ENCODE measurements at regions of chr9 and their contacts with region 1.

Region 1: GRCh38 chr9:112224401-112225289 is 49.5 kb upstream of the SUSD1 start:
- DNase-seq: no peak
- ATAC-seq: no peak
- H3K4me3 ChIP-seq: no peak overlapping the region
- H3K27ac ChIP-seq: no peak overlapping the region
- H3K4me1 ChIP-seq: peaks cover 0 to 7% (median 0%) of the 10 kb centered on the region in 12 donors
- H3K27me3 ChIP-seq: no peaks in the 10 kb centered on the region
- CTCF ChIP-seq: no peak
- POLR2A ChIP-seq: no peak

Region 2: GRCh38 chr9:112041536-112042243 is 183.0 kb before region 1 on chr9:
- intact Hi-C with region 1: no loop called
- DNase-seq: peak in 3 of 5 donors; percentile 40 to 77 (median 46)
- ATAC-seq: peak; percentile 63 to 97 (median 91)
- H3K4me3 ChIP-seq: no peak overlapping the region
- H3K27ac ChIP-seq: peak overlapping the region in 2 of 12 donors; percentile 38 to 41
- H3K4me1 ChIP-seq: peaks cover 0 to 16% (median 0%) of the 10 kb centered on the region in 12 donors
- H3K27me3 ChIP-seq: no peaks in the 10 kb centered on the region
- CTCF ChIP-seq: no peak
- POLR2A ChIP-seq: no peak

Region 3: GRCh38 chr9:112194969-112195431 is 29.6 kb before region 1 on chr9:
- intact Hi-C with region 1: no loop called
- DNase-seq: peak in 1 of 5 donors; percentile 23
- ATAC-seq: peak; percentile 49 to 60 (median 56)
- H3K4me3 ChIP-seq: no peak overlapping the region
- H3K27ac ChIP-seq: peak overlapping the region; percentile 26 to 85 (median 72)
- H3K4me1 ChIP-seq: peaks cover 0 to 21% (median 5%) of the 10 kb centered on the region in 12 donors
- H3K27me3 ChIP-seq: no peaks in the 10 kb centered on the region
- CTCF ChIP-seq: no peak
- POLR2A ChIP-seq: no peak

Region 4: GRCh38 chr9:112249277-112249676 is 24.6 kb after region 1 on chr9:
- intact Hi-C with region 1: no loop called
- DNase-seq: no peak
- ATAC-seq: no peak
- H3K4me3 ChIP-seq: no peak overlapping the region
- H3K27ac ChIP-seq: peak overlapping the region in 1 of 12 donors; percentile 10
- H3K4me1 ChIP-seq: peaks cover 0 to 8% (median 0%) of the 10 kb centered on the region in 12 donors
- H3K27me3 ChIP-seq: no peaks in the 10 kb centered on the region
- CTCF ChIP-seq: no peak
- POLR2A ChIP-seq: no peak

Region 5: GRCh38 chr9:112288029-112288428 is 63.4 kb after region 1 on chr9:
- intact Hi-C with region 1: loop called in 1 of 10 experiments (anchors 10 kb)
- DNase-seq: no peak
- ATAC-seq: peak in 3 of 4 donors; percentile 66 to 87 (median 82)
- H3K4me3 ChIP-seq: no peak overlapping the region
- H3K27ac ChIP-seq: no peak overlapping the region
- H3K4me1 ChIP-seq: peaks cover 0 to 22% (median 10%) of the 10 kb centered on the region in 12 donors
- H3K27me3 ChIP-seq: no peaks in the 10 kb centered on the region
- CTCF ChIP-seq: no peak
- POLR2A ChIP-seq: no peak